PC-3 (cell line): ENCODE measurements at regions of chr4 and their contacts with region 1.

Region 1: DNA sequence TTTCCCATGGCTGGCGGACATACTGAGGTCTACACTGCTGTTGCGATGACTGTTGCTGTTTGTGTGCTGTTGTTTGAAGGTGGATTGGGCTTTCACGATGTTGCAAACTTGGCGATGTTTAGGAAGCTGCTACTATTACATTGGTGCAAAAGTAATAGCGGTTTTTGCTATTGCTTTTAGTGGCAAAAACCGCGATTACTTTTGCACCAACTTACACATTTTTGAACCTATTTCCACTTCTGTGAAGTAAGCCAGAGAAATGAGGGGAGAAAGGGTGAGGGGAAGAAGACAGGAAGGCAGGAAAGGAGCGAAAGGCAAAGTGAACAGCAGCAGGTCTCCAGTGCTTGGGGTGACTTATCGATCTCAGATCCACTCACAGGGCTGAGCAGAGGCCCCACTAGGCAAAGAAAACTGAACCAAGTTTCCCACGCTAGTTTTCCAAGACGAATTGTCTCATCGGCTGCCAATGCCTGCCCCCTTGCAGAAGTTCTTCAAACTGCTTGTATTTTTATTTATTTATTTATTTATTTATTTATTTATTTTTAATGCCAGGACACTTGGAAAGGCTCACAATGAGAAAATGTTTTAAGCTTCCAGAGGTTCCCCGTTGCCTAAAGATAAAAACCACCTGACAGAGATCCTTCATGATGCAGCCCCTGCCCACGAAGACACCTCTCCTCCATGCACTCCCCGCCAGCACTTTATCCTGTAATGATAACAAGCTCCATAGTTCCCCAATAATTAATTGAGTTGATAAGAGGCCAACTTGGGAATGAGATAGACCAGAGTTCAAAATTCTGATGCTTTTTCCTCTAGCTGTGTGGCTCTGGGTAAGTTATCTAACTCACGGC is 43.3 kb downstream of the QDPR start:
- DNase-seq: peak; percentile 31
- ATAC-seq: no peak
- H3K4me3 ChIP-seq: no peak overlapping the region
- H3K27ac ChIP-seq: no peak overlapping the region
- H3K4me1 ChIP-seq: no peaks in the 10 kb centered on the region
- H3K27me3 ChIP-seq: no peaks in the 10 kb centered on the region
- CTCF ChIP-seq: no peak; the same call in 1 of the 2 replicates

Region 2: DNA sequence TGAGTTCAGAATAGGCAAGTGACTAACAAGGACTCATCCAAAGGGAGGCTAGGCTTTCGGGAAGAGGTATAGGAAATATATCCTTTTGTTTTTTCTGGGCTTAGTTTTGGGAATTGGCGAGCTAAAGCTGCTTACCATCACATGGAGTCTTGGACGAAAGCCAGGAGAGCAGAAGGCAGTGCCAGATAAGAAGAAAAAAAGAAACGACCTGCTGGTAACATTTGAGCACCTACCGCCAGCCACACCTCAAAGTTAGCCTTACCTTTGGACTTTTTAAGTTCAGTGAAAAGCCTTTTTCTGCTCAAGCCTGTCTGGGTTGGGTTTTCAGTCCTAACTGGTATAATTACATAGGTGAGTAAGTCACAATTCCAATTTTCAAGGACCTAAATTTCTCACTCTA is 638.0 kb after region 1 on chr4:
- CTCF ChIA-PET with region 1: interaction called, 10 read pairs
- POLR2A ChIA-PET with region 1: no interaction called
- intact Hi-C with region 1: no loop called
- DNase-seq: no peak
- ATAC-seq: no peak
- H3K4me3 ChIP-seq: no peak overlapping the region
- H3K27ac ChIP-seq: no peak overlapping the region
- H3K4me1 ChIP-seq: peaks cover 4% of the 10 kb centered on the region; the same call in 1 of the 2 replicates
- H3K27me3 ChIP-seq: peaks cover 26% of the 10 kb centered on the region; the same call in 1 of the 2 replicates
- CTCF ChIP-seq: no peak